GM18951 (cell line): ENCODE measurements at regions of chr3 and their contacts with region 1.

Region 1: GRCh38 chr3:43144761-43145490 is 39.0 kb upstream of the POMGNT2 start:
- POLR2A ChIP-seq: no peak

Region 2: GRCh38 chr3:43512754-43513404 is 368.0 kb after region 1 on chr3:
- in situ Hi-C with region 1: loop called (anchors 10 kb)
- POLR2A ChIP-seq: no peak